A673 (cell line): ENCODE measurements at regions of chr14 and their contacts with region 1.

Region 1: GRCh38 chr14:54722781-54723432 is 156.0 kb downstream of the SAMD4A start:
- DNase-seq: peak; percentile 83
- H3K4me3 ChIP-seq: no peak overlapping the region
- H3K27ac ChIP-seq: peak overlapping the region; percentile 28
- H3K4me1 ChIP-seq: peaks cover 39% of the 10 kb centered on the region
- H3K27me3 ChIP-seq: no peaks in the 10 kb centered on the region
- CTCF ChIP-seq: peak; percentile 64

Region 2: DNA sequence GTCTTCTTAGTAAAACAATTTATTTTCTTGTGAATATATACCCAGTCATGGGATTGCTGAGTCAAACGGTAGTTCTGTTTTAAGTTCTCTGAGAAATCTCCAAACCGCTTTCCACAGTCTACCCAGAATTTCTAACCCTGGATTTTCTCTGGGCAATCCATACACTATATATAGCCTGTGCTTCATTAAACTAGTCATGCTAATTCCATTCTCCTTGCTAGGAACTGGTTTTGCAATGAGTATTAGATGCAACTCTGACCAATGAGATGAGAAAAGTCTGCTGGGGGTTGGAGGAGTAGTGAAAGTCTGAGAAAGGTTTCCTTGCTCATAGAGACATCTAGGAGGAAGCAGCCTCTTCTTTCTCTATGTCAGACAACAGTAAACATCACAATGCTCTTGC is 522.2 kb before region 1 on chr14:
- CTCF ChIA-PET with region 1: no interaction called
- POLR2A ChIA-PET with region 1: no interaction called
- intact Hi-C with region 1: no loop called
- DNase-seq: no peak
- H3K4me3 ChIP-seq: no peak overlapping the region
- H3K27ac ChIP-seq: no peak overlapping the region
- H3K4me1 ChIP-seq: no peaks in the 10 kb centered on the region
- H3K27me3 ChIP-seq: no peaks in the 10 kb centered on the region
- CTCF ChIP-seq: no peak

Region 3: DNA sequence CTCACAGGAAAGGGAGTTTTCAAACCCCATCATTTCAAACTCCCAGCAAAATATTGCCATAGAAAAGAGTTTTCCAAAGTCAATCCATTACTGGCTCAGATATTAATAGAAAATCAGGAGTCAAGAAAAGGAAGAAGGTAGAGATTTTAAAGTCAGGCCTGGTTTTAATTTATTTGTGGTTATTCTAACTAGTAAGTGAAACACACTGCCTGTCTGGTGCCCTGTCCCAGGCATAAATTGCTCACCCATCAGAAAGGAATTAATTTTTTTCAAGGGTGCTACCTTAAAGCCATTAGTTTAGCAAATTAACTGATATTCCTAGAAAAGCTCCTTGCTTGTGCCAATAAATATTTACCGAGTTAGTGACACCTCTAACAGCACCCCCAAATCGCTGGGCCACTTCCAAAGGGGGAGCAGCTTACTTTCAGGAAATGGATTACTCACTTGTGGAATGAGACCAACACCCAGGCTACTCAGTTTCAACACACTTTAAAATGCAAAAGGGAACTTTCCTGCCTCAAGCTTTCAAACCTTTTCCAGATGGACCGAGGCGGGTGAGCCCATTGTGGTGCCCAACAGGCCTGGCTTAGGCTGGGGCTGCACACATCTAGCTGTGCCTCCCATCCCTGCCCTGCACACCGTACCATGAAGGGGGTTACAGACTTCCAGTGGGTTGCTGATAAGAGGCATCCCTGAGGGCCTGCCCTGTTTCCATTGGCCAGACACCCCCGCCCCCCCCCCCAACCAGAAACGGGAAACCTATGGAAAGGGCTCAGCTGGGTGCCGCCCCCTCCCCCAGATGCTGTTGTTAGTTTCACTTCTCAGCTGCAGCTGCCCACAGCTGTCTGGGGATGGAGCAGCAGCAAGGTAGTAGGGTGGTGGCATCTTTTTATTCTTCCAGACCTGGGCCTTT is 38.8 kb before region 1 on chr14:
- CTCF ChIA-PET with region 1: no interaction called
- POLR2A ChIA-PET with region 1: no interaction called
- intact Hi-C with region 1: no loop called
- DNase-seq: peak; percentile 40
- H3K4me3 ChIP-seq: no peak overlapping the region
- H3K27ac ChIP-seq: no peak overlapping the region
- H3K4me1 ChIP-seq: peaks cover 22% of the 10 kb centered on the region
- H3K27me3 ChIP-seq: no peaks in the 10 kb centered on the region
- CTCF ChIP-seq: no peak

Region 4: DNA sequence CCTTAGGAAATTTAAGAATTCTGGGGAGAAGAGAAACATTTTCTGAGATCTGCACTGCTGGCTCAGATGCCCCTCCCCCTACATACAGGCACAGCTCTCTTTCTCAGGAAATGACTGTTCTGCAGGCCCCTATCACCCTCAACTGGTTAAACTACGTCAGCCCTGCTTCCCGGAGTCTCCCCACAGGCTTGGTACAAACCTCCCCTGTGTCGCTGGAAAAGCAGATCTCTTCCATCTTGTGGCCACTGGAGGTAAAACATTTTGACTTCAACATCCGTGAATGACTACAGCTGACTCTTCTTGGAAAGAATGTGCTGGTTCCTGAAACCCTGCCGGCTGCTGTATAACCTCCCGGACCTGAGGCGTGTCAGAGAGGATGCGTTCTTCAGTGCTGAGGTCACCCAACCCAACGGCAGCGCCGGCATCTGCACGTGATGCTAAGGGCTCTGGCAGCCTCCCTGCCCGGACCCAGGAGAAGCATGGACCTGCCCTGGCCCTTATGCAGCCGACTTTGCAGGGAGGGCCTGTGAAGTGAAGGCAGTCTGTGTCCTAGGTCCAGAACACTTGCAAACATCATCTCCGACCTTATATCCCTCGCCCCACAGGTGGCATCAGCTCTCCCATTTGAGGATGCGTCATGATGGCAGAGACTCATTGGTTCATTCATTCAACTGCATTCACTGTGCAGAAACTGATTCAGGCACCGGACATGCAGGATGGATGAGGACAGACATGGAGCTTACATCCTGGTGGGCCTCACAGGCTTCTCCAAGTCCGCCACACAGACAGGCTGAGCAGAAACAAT is 50.5 kb after region 1 on chr14:
- CTCF ChIA-PET with region 1: interaction called, 15 read pairs
- POLR2A ChIA-PET with region 1: no interaction called
- intact Hi-C with region 1: no loop called
- DNase-seq: peak; percentile 97
- H3K4me3 ChIP-seq: no peak overlapping the region
- H3K27ac ChIP-seq: peak overlapping the region; percentile 70
- H3K4me1 ChIP-seq: peaks cover 27% of the 10 kb centered on the region
- H3K27me3 ChIP-seq: no peaks in the 10 kb centered on the region
- CTCF ChIP-seq: peak; percentile 64